ENCODE measurements at regions of chr12 and their contacts with region 1.

Region 1: DNA sequence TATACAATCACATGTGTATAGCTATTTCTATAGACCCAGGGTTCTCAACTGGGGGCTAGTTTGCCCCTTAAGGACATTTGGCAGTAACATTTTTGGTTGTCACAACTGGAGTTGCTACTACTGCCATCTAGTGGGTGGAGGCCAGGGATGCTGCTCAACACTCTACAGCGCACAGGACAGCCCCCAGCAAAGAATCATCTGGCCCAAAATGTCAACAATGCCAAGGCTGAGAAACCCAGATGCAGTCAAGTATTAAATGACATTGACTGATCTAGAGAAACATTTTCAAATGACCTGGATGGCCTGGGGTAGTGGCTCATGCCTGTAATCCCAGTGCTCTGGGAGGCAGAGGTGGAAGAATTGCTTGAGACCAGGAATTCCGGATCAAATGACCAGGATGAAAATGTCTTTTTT is 5.8 kb downstream of the WSB2 start:
- DNase-seq: peak; percentile 45
- ATAC-seq: peak; percentile 95
- H3K4me3 Mint-ChIP-seq: no peak overlapping the region
- H3K27ac Mint-ChIP-seq: no peak overlapping the region
- H3K4me1 Mint-ChIP-seq: peaks cover 20% of the 10 kb centered on the region
- H3K27me3 Mint-ChIP-seq: no peaks in the 10 kb centered on the region
- CTCF ChIP-seq: no peak

Region 2: DNA sequence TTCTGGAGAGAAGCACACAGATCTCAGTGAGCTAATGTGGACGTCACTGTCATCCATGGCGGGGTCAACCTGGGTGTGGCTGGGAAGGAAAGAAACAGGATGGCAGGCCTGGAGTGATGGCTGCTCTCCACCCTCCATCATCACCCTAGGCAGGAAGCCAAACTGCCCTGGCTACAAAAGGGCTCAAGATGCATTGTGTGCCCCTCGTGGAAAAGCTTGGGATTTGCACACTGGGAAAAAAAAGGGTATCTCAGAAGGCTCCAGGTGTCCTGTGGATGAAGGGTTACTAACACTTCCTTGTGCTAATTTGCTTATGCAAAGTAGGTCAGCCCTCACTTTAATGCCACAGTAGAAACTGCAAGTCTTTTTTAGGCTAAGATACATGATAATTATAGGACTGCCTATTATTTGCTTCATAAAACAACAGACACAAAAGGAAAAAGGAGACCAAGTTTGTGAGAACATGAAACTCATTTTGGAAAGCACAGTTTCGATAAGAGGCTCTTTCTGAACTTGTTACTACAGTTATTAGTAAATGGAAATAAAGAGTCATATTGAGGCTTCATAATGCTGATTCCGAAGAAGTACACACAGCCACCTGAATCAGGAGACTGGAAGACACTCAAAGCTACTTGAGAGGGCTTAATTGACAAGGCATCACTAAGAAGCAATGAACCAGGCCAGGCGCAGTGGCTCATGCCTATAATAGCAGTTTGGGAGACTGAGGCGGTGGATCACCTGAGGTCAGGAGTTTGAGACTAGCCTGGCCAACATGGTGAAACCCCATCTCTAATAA is 19.7 kb before region 1 on chr12:
- CTCF ChIA-PET with region 1: no interaction called
- POLR2A ChIA-PET with region 1: no interaction called
- intact Hi-C with region 1: loop called (anchors 1 kb)
- DNase-seq: no peak
- ATAC-seq: peak; percentile 72
- H3K4me3 Mint-ChIP-seq: no peak overlapping the region
- H3K27ac Mint-ChIP-seq: peak overlapping the region; percentile 46
- H3K4me1 Mint-ChIP-seq: peaks cover 19% of the 10 kb centered on the region
- H3K27me3 Mint-ChIP-seq: no peaks in the 10 kb centered on the region
- CTCF ChIP-seq: no peak